H1 (cell line): ENCODE measurements at regions of chr19 and their contacts with region 1.

Region 1: GRCh38 chr19:45824041-45824471 is 8.9 kb upstream of the RSPH6A start:
- DNase-seq: no peak
- H3K4me3 ChIP-seq: no peak overlapping the region
- H3K27ac ChIP-seq: no peak overlapping the region
- H3K4me1 ChIP-seq: no peaks in the 10 kb centered on the region; a peak in 1 of 7 replicates
- H3K27me3 ChIP-seq: no peaks in the 10 kb centered on the region
- CTCF ChIP-seq: no peak
- EP300 ChIP-seq: no peak
- POLR2A ChIP-seq: no peak
- RAD21 ChIP-seq: no peak

Region 2: GRCh38 chr19:45667620-45668341 is 156.3 kb before region 1 on chr19 and contains the start of gene GIPR:
- CTCF ChIA-PET with region 1: no interaction called
- POLR2A ChIA-PET with region 1: no interaction called
- DNase-seq: peak in 1 of 2 experiments; percentile 89
- H3K4me3 ChIP-seq: peak within 1 kb of the TSS; percentile 31 to 65 (median 46); a peak in 7 of 8 replicates
- H3K27ac ChIP-seq: no peak within 1 kb of the TSS
- H3K4me1 ChIP-seq: peaks cover 9 to 14% (median 11%) of the 10 kb centered on the region in 4 experiments
- H3K27me3 ChIP-seq: peaks cover 18 to 31% (median 27%) of the 10 kb centered on the region in 4 experiments
- CTCF ChIP-seq: no peak
- EP300 ChIP-seq: no peak
- POLR2A ChIP-seq: no peak
- RAD21 ChIP-seq: no peak
- total RNA-seq, gene GIPR: 0.54 and 1.3 TPM in 2 replicates

Region 3: DNA sequence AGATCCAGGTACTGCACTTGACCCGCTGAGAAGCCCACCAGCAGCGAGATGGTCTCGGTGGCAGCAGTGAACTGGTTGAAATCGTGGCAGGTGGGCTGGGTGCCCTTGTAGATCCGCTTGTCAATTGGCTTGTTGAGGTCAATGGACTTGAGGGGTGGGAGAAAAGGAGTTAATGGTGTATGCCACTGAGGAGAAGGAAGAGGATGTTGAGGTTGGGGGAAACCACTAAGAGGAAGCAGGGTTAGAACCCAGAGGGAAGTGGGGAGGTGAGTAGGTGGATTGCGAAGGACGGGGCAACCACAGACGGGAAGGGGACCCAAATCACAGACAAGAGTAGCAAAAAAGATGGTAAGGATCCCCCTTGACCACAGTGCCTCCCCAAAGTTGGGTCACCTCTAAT is 33.1 kb before region 1 on chr19:
- CTCF ChIA-PET with region 1: no interaction called
- POLR2A ChIA-PET with region 1: no interaction called
- DNase-seq: no peak
- H3K4me3 ChIP-seq: no peak overlapping the region; a peak in 1 of 8 replicates
- H3K27ac ChIP-seq: no peak overlapping the region
- H3K4me1 ChIP-seq: peaks cover 0 to 6% (median 4%) of the 10 kb centered on the region in 4 experiments; a peak in 3 of 7 replicates
- H3K27me3 ChIP-seq: no peaks in the 10 kb centered on the region
- CTCF ChIP-seq: no peak
- EP300 ChIP-seq: no peak
- POLR2A ChIP-seq: no peak
- RAD21 ChIP-seq: no peak

Region 4: GRCh38 chr19:45834970-45835369 is 10.9 kb after region 1 on chr19:
- CTCF ChIA-PET with region 1: interaction called, 42 read pairs
- POLR2A ChIA-PET with region 1: interaction called, 22 read pairs
- DNase-seq: no peak
- H3K4me3 ChIP-seq: no peak overlapping the region
- H3K27ac ChIP-seq: no peak overlapping the region
- H3K4me1 ChIP-seq: no peaks in the 10 kb centered on the region
- H3K27me3 ChIP-seq: no peaks in the 10 kb centered on the region
- CTCF ChIP-seq: no peak
- EP300 ChIP-seq: no peak
- POLR2A ChIP-seq: no peak
- RAD21 ChIP-seq: no peak

Region 5: GRCh38 chr19:45848922-45849321 is 24.9 kb after region 1 on chr19:
- CTCF ChIA-PET with region 1: interaction called, 10 read pairs
- POLR2A ChIA-PET with region 1: interaction called, 4 read pairs
- DNase-seq: no peak
- H3K4me3 ChIP-seq: no peak overlapping the region
- H3K27ac ChIP-seq: no peak overlapping the region
- H3K4me1 ChIP-seq: no peaks in the 10 kb centered on the region
- H3K27me3 ChIP-seq: no peaks in the 10 kb centered on the region; a peak in 1 of 7 replicates
- CTCF ChIP-seq: peak in 2 of 3 experiments; percentile 12 to 28; a peak in 2 of 4 replicates
- EP300 ChIP-seq: no peak
- POLR2A ChIP-seq: no peak
- RAD21 ChIP-seq: 0 out of 4 replicates have a peak, but pooled peaks of 1 of the 2 experiments have one; percentile 3